K562 (cell line): ENCODE measurements at regions of chr4 and their contacts with region 1.

Region 1: DNA sequence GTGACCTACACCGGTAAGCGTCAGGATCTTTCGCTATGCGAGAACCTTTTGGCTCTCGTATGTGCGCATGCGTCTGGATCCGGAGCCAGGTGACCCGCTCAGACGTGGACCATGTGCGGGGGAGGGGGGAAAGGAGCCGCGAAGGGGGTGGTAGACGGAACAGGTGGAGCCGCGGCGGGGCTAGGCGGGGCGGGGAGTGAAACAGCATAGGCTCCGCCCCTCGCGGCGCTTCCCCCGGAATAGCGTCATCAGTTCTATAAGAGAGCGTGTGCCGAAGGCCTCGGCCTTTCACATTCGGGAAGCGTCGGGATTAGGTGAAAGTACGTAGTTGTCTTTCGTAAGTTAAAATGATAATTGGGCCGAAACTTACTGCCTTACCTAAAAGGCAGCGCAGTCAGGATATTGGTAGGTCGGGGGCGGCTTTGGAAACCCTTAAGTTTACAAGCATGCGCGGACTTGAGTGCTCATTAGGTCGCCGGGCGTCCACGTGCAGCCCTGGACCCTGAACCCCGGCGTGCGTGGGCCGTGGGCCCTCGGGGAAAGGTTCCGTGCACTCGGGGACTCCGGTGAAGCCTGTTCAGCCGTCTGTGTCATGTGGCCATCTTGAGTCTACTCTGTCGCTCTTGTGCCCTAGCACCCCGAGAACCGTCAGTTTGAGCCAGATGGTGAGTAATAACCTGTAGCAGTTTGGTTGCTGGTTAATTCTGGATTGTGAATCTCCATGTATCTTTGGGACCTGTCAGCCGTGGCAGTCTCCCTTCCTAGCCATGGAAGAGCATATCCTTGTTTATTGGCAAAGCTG is 74.1 kb downstream of the PRSS12 start:
- DNase-seq: peak; percentile 97 to 99 (median 98)
- ATAC-seq: peak; percentile 89
- H3K4me3 ChIP-seq: peak overlapping the region; percentile 84
- H3K27ac ChIP-seq: peak overlapping the region; percentile 95
- H3K4me1 ChIP-seq: peaks cover 4 to 6% of the 10 kb centered on the region in 2 experiments; a peak in 2 of 5 replicates
- H3K27me3 ChIP-seq: no peaks in the 10 kb centered on the region
- CTCF ChIP-seq: no peak
- EP300 ChIP-seq: no peak; the same call in none of the 2 replicates
- POLR2A ChIP-seq: peak; percentile 100
- RAD21 ChIP-seq: no peak

Region 2: GRCh38 chr4:116358588-116359222 is 1920.0 kb before region 1 on chr4:
- CTCF ChIA-PET with region 1: no interaction called
- POLR2A ChIA-PET with region 1: no interaction called
- in situ Hi-C with region 1: no loop called
- intact Hi-C with region 1: loop called (anchors 10 kb)
- DNase-seq: peak; percentile 24 to 69 (median 34)
- ATAC-seq: peak; percentile 85
- H3K4me3 ChIP-seq: no peak overlapping the region
- H3K27ac ChIP-seq: no peak overlapping the region
- H3K4me1 ChIP-seq: no peaks in the 10 kb centered on the region
- H3K27me3 ChIP-seq: no peaks in the 10 kb centered on the region
- CTCF ChIP-seq: peak; percentile 28 to 46 (median 44); a peak in 3 of 6 replicates
- EP300 ChIP-seq: no peak
- POLR2A ChIP-seq: no peak
- RAD21 ChIP-seq: peak; percentile 75 to 80

Region 3: DNA sequence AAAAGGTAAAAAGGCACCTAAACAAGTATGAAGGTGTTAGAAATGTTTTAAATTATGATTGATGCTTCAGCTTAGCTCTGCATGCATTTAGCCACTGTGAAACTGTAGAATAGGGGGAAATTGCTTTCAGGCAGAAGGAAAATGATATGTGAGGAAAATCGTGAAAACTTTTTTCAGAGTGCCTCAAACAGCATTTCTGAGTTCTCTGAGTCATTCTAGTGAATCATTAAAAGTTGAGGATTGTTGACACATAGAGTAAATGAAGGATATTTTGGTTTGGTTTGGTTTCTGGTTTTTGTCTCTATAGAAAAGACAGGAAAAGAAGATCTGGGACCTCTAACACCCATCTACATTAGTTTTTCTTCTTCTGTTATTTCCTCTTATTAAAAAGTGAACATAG is 860.8 kb before region 1 on chr4:
- CTCF ChIA-PET with region 1: no interaction called
- POLR2A ChIA-PET with region 1: no interaction called
- in situ Hi-C with region 1: no loop called
- intact Hi-C with region 1: no loop called
- DNase-seq: no peak
- ATAC-seq: no peak
- H3K4me3 ChIP-seq: no peak overlapping the region
- H3K27ac ChIP-seq: no peak overlapping the region
- H3K4me1 ChIP-seq: no peaks in the 10 kb centered on the region
- H3K27me3 ChIP-seq: no peaks in the 10 kb centered on the region
- CTCF ChIP-seq: no peak
- EP300 ChIP-seq: no peak
- POLR2A ChIP-seq: no peak
- RAD21 ChIP-seq: no peak

Region 4: GRCh38 chr4:118076958-118077766 is 201.5 kb before region 1 on chr4:
- CTCF ChIA-PET with region 1: no interaction called
- POLR2A ChIA-PET with region 1: no interaction called
- in situ Hi-C with region 1: no loop called
- intact Hi-C with region 1: loop called (anchors 10 kb)
- DNase-seq: peak in 1 of 4 experiments; percentile 6
- ATAC-seq: no peak
- H3K4me3 ChIP-seq: no peak overlapping the region
- H3K27ac ChIP-seq: no peak overlapping the region
- H3K4me1 ChIP-seq: no peaks in the 10 kb centered on the region
- H3K27me3 ChIP-seq: no peaks in the 10 kb centered on the region
- CTCF ChIP-seq: peak in 1 of 3 experiments; percentile 38; a peak in 1 of 6 replicates
- EP300 ChIP-seq: no peak
- POLR2A ChIP-seq: no peak
- RAD21 ChIP-seq: no peak

Region 5: DNA sequence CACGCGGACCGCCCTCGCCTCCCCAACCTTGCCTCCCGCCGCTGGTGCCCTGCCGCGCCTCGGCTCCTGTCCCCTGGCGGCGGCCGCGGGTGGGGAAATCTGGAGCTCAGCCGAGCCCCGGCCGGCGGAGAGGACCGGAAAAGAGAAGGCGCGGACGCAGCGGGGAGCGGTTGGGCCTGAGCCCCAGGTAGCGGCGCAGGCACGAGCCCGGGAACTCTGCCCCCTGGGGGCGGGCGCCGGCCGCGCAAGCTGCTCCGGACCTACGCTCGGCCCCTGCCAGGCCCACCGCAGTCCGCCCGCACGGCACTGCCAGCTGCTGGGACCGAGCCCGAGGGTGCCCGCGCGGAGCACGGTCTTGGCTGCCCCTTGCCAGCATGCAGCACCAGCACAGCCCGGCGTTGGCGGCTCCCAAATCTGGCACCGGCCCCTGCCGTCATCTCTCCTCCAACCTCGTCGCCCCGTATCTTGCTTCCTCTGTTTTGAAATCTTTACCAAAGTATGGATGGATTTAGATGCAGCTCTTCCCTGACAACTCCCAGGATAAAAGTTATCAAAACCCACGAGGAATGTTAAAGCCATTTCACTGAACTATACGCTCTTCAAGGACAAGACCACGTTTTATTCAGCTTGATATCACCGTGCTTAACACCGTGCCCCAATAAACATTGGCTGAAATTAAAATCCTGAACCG is 74.3 kb after region 1 on chr4 and contains the start of gene PRSS12:
- CTCF ChIA-PET with region 1: no interaction called
- POLR2A ChIA-PET with region 1: no interaction called
- in situ Hi-C with region 1: no loop called
- intact Hi-C with region 1: loop called (anchors 5 kb)
- DNase-seq: peak; percentile 31 to 51 (median 42)
- ATAC-seq: peak; percentile 98
- H3K4me3 ChIP-seq: no peak within 1 kb of the TSS
- H3K27ac ChIP-seq: no peak within 1 kb of the TSS
- H3K4me1 ChIP-seq: peaks cover 0 to 5% of the 10 kb centered on the region in 2 experiments; a peak in 1 of 5 replicates
- H3K27me3 ChIP-seq: peaks cover 2 to 16% of the 10 kb centered on the region in 2 experiments; a peak in 3 of 5 replicates
- CTCF ChIP-seq: peak in 2 of 3 experiments; percentile 33 to 56; a peak in 5 of 6 replicates
- EP300 ChIP-seq: no peak
- POLR2A ChIP-seq: no peak
- RAD21 ChIP-seq: no peak
- polyA plus RNA-seq, gene PRSS12: 0.06 to 0.11 TPM

Region 6: DNA sequence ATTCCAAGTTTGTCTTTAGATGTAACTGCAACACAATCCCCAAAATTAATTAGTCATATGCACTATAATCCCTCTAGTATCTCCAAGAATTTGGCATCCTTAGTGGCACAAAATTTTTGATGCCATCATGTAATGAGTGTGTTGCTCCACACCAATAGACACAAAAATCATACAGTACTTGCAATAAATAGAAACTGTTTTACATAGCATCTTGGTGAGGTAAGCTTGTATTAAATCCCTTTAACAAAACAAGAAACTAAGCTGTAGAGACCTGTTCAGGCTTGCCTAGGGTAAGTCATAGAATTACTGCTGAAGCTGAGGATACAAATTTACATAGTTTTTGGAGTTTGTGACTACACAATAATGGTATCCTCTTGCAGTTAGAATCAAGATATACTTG is 138.7 kb after region 1 on chr4:
- CTCF ChIA-PET with region 1: no interaction called
- POLR2A ChIA-PET with region 1: no interaction called
- in situ Hi-C with region 1: no loop called
- intact Hi-C with region 1: no loop called
- DNase-seq: no peak
- ATAC-seq: no peak
- H3K4me3 ChIP-seq: no peak overlapping the region
- H3K27ac ChIP-seq: no peak overlapping the region
- H3K4me1 ChIP-seq: no peaks in the 10 kb centered on the region; a peak in 1 of 5 replicates
- H3K27me3 ChIP-seq: no peaks in the 10 kb centered on the region
- CTCF ChIP-seq: no peak
- EP300 ChIP-seq: no peak
- POLR2A ChIP-seq: no peak
- RAD21 ChIP-seq: no peak

Region 7: DNA sequence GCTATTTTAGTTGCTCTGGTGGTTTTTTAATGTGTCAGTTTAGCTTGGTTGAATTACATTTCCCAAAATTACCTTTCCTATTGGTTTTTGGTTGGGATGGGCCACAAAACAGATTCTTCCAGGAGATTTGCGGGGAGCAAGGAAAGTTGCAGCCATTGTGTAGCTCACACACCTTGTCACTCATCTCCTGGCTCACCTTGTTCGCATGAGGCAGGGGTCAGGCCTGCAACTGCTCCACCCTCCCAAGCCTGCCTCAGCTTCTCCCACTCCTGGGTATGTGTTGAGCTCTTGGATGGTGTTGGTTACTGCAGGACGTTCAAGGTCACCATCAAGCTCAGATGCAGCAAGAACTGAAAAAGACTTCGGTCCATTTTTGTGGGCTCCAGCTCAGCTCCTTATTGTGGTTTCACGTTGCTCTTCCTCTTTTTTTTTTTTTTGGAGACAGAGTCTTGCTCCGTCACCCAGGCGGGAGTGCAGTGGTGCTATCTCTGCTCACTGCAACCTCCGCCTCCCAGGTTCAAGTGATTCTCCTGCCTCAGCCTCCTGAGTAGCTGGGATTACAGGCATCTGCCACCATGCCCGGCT is 310.9 kb after region 1 on chr4:
- CTCF ChIA-PET with region 1: no interaction called
- POLR2A ChIA-PET with region 1: no interaction called
- in situ Hi-C with region 1: no loop called
- intact Hi-C with region 1: loop called (anchors 2 kb)
- DNase-seq: no peak
- ATAC-seq: no peak
- H3K4me3 ChIP-seq: no peak overlapping the region
- H3K27ac ChIP-seq: no peak overlapping the region
- H3K4me1 ChIP-seq: peaks cover 4 to 19% of the 10 kb centered on the region in 2 experiments; a peak in 4 of 5 replicates
- H3K27me3 ChIP-seq: no peaks in the 10 kb centered on the region
- CTCF ChIP-seq: no peak
- EP300 ChIP-seq: no peak
- POLR2A ChIP-seq: no peak
- RAD21 ChIP-seq: no peak

Region 8: DNA sequence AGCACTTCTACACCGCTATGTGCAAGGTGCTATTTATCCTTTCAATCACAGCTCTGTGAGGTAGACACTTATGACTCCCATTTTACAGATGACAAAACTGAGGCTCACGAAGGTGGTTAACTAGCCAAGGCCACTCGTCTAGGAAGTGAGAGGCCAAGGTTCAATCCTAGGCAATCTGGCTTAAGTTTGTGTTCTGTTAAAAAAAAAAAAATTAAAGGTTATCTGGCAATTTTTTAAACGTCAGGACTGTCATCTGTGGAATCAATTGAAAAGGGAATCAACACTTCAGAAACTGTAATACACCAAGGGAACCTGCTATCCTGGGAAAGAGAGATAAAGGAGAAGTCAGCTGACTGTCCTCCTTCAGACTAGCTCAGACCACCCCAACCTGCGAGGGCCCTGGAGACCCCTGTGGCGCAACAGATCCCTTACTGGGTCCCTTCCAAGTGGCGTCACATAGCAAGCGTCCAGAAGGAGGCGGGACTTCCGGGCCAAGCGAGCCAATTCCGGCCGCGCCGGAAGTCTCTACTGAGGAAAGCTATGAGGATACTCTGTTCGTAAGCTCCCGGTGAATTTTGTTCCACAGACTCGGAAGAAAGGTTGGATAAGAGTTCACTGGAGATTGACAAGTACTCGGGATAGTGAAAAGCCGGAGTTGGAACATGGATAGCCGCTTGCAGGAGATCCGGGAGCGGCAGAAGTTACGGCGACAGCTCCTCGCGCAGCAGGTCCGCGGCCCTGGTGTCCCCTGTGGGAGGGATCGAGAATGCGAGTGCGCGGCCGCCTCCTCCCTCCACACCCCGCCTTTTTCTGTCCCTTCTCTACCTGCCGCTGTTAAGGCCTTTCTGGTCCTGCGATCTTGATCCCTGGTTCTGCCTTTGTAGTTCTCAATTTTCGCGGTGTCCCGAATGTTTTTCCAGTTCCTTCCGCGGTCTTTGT is 406.5 kb after region 1 on chr4 and contains the start of gene METTL14:
- CTCF ChIA-PET with region 1: no interaction called
- POLR2A ChIA-PET with region 1: no interaction called
- in situ Hi-C with region 1: loop called (anchors 25 kb)
- intact Hi-C with region 1: loop called (anchors 5 kb)
- DNase-seq: peak; percentile 82 to 96 (median 84)
- ATAC-seq: peak; percentile 97
- H3K4me3 ChIP-seq: peak within 1 kb of the TSS; percentile 63
- H3K27ac ChIP-seq: peak within 1 kb of the TSS; percentile 93
- H3K4me1 ChIP-seq: peaks cover 3 to 9% of the 10 kb centered on the region in 2 experiments; a peak in 3 of 5 replicates
- H3K27me3 ChIP-seq: no peaks in the 10 kb centered on the region
- CTCF ChIP-seq: no peak
- EP300 ChIP-seq: no peak
- POLR2A ChIP-seq: peak; percentile 94
- RAD21 ChIP-seq: no peak
- polyA plus RNA-seq, gene METTL14: 16.7 to 27.2 TPM

Region 9: GRCh38 chr4:118823107-118823870 is 544.6 kb after region 1 on chr4:
- CTCF ChIA-PET with region 1: no interaction called
- POLR2A ChIA-PET with region 1: no interaction called
- in situ Hi-C with region 1: no loop called
- intact Hi-C with region 1: no loop called
- DNase-seq: no peak
- ATAC-seq: no peak
- H3K4me3 ChIP-seq: no peak overlapping the region
- H3K27ac ChIP-seq: no peak overlapping the region
- H3K4me1 ChIP-seq: peaks cover 0 to 9% of the 10 kb centered on the region in 2 experiments; a peak in 3 of 5 replicates
- H3K27me3 ChIP-seq: no peaks in the 10 kb centered on the region
- CTCF ChIP-seq: no peak
- EP300 ChIP-seq: no peak
- POLR2A ChIP-seq: no peak
- RAD21 ChIP-seq: no peak